H1 (cell line): ENCODE measurements at regions of chr4 and their contacts with region 1.

Region 1: DNA sequence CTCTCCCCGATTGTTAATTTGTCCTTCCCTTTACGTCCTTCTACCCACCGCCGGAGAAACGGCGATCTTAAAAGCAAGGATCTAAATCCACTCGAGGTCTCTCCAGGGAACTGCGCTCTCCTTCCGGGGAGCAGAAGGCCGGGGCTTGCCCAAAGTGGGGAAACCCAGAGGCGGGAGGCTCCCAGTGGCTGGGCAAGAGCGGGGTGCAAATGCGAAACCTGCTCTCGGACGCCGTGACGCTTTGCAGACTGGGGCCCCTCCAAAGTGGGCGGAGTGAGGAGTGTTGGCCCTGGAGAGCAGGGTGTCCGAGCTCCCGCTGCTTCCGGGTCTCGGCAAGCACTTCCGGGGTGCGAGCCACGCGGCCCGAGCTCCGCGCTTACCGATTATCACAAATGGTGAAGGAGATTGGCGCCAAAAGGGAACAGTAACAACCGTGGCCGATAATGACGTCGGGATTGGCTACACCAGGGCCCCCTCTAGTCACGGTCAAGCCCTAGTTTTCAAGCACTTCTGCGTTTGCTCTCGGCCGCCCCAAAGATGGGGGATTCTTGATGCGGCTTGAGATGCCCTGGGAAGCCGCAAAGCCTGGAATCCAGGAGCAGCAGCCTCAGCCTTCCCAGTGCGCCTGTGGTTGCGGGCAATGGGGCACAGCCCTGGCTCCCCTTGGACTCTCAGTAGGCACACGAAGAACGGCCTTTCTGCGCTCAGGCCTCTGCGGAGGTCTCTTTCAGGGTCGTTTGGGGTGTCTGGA is 29.0 kb downstream of the HAND2 start:
- DNase-seq: peak in 1 of 2 experiments; percentile 63
- H3K4me3 ChIP-seq: peak overlapping the region; percentile 59 to 72 (median 65)
- H3K27ac ChIP-seq: no peak overlapping the region
- H3K4me1 ChIP-seq: peaks cover 12 to 17% (median 12%) of the 10 kb centered on the region in 4 experiments
- H3K27me3 ChIP-seq: peaks cover 53 to 76% (median 68%) of the 10 kb centered on the region in 4 experiments
- CTCF ChIP-seq: no peak
- EP300 ChIP-seq: no peak
- POLR2A ChIP-seq: no peak
- RAD21 ChIP-seq: no peak

Region 2: DNA sequence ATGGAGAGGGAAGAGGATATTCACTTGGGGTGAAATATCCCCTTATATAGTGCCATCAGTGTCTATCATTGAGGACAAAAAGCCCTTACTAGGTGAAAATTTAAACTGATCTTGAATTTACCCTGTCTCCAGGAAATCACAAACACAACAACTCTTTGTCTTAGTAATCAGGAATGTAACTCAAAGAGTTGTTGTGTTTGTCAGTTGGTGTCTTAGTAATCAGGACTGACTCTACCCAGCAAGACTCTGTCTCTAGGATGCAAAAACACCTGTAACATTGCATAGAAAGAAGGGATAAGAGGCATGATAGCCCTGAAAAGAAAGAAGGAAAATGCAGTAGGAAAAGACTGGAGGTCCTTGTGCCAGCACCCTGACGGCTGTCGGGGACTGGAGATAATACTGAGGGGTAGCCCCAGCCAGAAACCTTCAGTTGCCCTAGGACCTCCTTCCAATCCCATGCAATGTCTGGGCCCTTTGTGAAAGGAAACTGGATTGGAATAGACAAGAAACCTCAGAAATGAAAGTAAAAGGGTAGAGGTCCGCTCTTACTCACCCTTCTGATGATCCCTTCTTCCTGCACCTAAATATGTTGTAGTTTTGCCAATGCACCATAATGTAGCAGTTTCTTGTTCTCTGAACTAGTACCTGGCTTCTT is 212.2 kb before region 1 on chr4:
- CTCF ChIA-PET with region 1: no interaction called
- POLR2A ChIA-PET with region 1: no interaction called
- DNase-seq: no peak
- H3K4me3 ChIP-seq: no peak overlapping the region
- H3K27ac ChIP-seq: no peak overlapping the region
- H3K4me1 ChIP-seq: 0 out of 7 replicates have a peak, but pooled peaks cover 0 to 1% (median 0%) of the 10 kb centered on the region in 4 experiments
- H3K27me3 ChIP-seq: peaks cover 0 to 1% (median 0%) of the 10 kb centered on the region in 4 experiments; a peak in 1 of 7 replicates
- CTCF ChIP-seq: no peak
- EP300 ChIP-seq: no peak
- POLR2A ChIP-seq: no peak
- RAD21 ChIP-seq: no peak

Region 3: DNA sequence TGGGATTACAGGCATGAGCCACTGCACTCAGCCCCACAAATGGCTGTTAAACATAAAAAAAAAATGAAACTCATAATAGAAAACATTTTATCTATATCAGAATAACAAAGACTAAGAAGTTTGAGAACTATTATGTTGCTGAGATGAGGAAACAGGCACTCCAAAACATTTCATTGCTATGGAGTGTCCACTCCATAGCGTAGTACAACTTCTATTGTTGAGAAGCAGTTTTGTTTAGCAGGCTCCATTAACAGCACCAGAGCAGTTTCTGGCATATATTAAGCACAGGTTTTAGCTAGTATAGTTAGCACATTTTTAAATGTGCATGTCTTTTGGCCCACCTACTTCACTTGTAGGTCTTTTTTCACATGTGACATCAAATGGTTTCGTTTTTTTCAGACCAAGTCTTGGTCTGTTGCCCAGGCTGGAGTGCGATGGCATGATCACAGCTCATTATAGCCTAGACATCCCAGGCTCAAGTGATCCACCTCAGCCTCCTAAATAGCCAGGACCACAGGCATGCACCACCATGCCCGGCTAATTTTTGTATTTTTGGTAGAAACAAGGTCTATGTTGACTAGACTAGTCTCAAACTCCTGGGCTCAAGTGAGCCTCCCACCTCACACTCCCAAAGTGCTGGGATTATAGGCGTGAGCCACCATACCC is 172.6 kb before region 1 on chr4:
- CTCF ChIA-PET with region 1: no interaction called
- POLR2A ChIA-PET with region 1: no interaction called
- DNase-seq: no peak
- H3K4me3 ChIP-seq: no peak overlapping the region
- H3K27ac ChIP-seq: no peak overlapping the region
- H3K4me1 ChIP-seq: peaks cover 0 to 3% (median 1%) of the 10 kb centered on the region in 4 experiments; a peak in 3 of 7 replicates
- H3K27me3 ChIP-seq: no peaks in the 10 kb centered on the region
- CTCF ChIP-seq: no peak
- EP300 ChIP-seq: no peak
- POLR2A ChIP-seq: no peak
- RAD21 ChIP-seq: no peak

Region 4: DNA sequence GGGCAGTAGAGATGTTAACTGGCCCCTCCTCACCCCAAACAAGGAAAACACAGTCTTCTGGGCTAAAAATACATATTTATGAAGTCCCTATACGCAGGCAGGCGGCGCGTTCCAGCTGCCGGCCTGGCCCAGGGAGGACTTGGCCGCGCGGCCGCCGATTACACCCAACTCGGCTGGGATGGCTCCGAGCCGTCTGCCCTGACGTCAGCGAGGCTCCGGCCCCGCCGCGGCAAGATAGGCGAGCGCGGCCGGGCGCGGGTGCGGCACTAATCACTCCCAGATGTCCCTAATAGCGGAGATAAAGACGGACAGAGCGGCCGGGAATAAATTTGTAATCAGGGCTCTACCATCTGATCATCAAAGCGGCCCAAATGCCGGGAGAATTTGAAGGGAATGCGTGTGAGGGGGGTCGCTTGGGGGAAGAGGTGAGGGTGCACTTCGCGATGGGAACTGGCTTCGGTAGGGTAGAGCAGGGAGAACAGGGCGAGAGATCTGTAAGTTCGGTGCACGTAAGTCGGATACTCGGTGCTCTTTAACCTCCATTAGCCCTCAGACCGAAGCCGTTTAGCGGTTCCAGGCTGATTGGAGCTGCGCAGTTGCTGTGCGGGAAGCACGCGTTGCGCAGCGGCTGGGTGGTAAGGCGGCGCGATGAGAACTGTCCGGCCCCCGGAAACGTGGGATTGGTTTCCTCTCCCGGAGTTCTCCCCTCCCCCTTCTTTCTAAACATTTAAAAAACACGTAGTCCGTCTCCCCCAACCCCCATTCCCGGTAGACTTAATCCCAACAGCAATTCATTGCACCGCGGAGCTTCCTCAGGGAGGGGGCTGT is 21.3 kb after region 1 on chr4:
- CTCF ChIA-PET with region 1: interaction called, 39 read pairs
- POLR2A ChIA-PET with region 1: interaction called, 10 read pairs
- DNase-seq: peak in 1 of 2 experiments; percentile 76
- H3K4me3 ChIP-seq: peak overlapping the region; percentile 36 to 53 (median 42); a peak in 7 of 8 replicates
- H3K27ac ChIP-seq: no peak overlapping the region
- H3K4me1 ChIP-seq: peaks cover 8 to 41% (median 30%) of the 10 kb centered on the region in 4 experiments
- H3K27me3 ChIP-seq: peaks cover 97 to 100% (median 100%) of the 10 kb centered on the region in 4 experiments
- CTCF ChIP-seq: no peak
- EP300 ChIP-seq: no peak
- POLR2A ChIP-seq: no peak
- RAD21 ChIP-seq: no peak

Region 5: GRCh38 chr4:173943547-173943946 is 442.5 kb after region 1 on chr4:
- CTCF ChIA-PET with region 1: no interaction called
- POLR2A ChIA-PET with region 1: no interaction called
- DNase-seq: no peak
- H3K4me3 ChIP-seq: no peak overlapping the region
- H3K27ac ChIP-seq: no peak overlapping the region
- H3K4me1 ChIP-seq: no peaks in the 10 kb centered on the region
- H3K27me3 ChIP-seq: peaks cover 0 to under 1% (median 0%) of the 10 kb centered on the region in 4 experiments; a peak in 1 of 7 replicates
- CTCF ChIP-seq: no peak
- EP300 ChIP-seq: no peak
- POLR2A ChIP-seq: no peak
- RAD21 ChIP-seq: no peak